Endothelial cell of umbilical vein (primary cell): ENCODE measurements at regions of chrX and their contacts with region 1.

Region 1: DNA sequence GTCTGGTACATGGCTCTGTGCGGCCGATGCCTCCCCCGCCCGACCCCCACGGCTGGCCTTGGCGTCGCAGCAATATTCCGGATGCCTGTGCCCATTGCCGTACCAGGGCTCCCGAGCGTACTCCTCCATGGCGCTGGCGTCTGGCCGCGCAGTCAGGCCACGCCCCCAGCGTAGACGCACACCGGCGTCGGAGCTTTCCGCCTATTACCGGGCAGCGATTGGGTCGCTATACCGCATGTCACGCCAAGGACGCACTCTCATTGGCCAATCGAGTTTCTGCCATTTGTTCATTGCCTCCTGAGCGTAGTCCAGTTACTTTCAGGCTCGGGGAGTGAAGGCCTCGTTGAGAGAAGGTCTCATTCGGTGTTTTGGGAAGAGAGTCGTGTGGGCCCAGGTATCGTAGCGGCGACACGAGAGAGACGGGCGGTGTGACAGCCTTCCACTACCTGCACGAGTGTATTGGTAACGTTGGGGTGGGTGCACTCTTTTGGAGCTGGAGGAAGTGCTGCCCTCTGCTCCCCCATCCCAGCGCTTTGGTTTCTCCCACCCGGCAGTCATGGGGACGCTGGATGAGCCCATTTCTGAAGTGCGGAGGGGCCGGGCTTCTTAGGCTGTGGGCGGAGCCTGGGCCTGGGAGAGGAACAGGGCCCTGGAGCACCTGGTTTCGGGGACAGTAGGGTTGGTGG is at the starts of genes PQBP1 and TIMM17B:
- DNase-seq: peak; percentile 96
- H3K4me3 ChIP-seq: peak within 1 kb of the TSS; percentile 17 to 65 (median 51)
- H3K27ac ChIP-seq: peak within 1 kb of the TSS; percentile 69
- H3K4me1 ChIP-seq: peaks cover 6% of the 10 kb centered on the region
- H3K27me3 ChIP-seq: no peaks in the 10 kb centered on the region
- CTCF ChIP-seq: no peak
- POLR2A ChIP-seq: peak; percentile 72
- total RNA-seq, gene PQBP1: 72.8 and 86.3 TPM in 2 replicates
- total RNA-seq, gene TIMM17B: 30.0 and 36.0 TPM in 2 replicates

Region 2: DNA sequence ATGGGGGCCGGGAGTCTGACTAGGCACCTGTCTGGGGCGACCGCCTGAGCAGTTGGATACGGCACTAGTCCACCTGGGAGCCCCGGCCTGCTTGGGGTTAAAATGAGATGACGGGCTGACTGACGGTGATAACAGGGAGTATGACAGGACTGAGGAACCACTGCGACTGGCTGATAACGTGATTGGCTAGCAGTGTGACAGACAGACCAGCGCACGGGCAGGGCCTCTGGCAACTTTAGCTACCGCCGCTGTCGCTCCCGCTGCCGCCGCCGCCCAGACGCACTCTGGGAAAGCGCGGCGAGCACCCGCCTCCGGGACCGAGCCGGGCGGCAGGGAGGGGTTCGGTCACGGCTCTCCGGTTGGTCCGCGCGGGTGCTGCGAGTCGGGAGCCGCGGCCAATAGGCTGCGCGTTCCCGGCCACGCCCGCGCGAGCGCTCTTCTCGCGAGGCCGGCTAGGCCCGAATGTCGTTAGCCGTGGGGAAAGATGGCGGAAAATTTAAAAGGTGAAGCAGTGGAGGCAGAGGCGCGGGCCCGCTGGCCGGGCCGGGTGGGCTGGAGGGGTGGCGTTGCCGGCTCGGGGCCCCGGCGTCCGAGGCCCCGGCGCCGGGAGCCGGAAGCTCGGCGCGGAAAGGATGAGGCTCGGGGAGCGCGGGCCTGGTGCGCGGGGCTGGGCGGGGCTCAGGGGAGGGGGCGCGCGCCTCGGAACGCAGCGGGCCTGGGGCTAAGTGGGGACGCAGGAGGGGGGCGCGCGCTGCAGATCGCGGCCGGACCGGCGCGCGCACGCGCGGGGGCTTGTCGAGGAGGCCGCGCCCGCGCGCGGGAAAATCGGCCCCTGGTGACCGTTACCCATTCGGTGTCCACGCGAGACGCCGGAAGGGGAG is 201.2 kb before region 1 on chrX and contains the start of gene SUV39H1:
- CTCF ChIA-PET with region 1: no interaction called
- POLR2A ChIA-PET with region 1: no interaction called
- dilution Hi-C with region 1: no loop called
- intact Hi-C with region 1: loop called (anchors 1 kb)
- DNase-seq: peak; percentile 87
- H3K4me3 ChIP-seq: peak within 1 kb of the TSS; percentile 60 to 76 (median 72)
- H3K27ac ChIP-seq: peak within 1 kb of the TSS; percentile 57
- H3K4me1 ChIP-seq: peaks cover 5% of the 10 kb centered on the region
- H3K27me3 ChIP-seq: no peaks in the 10 kb centered on the region
- CTCF ChIP-seq: no peak
- POLR2A ChIP-seq: peak; percentile 80
- total RNA-seq, gene SUV39H1: 18.2 and 20.0 TPM in 2 replicates

Region 3: GRCh38 chrX:48737213-48737938 is 160.4 kb before region 1 on chrX:
- CTCF ChIA-PET with region 1: no interaction called
- POLR2A ChIA-PET with region 1: interaction called, 3 read pairs
- dilution Hi-C with region 1: no loop called
- intact Hi-C with region 1: loop called (anchors 1 kb)
- DNase-seq: peak; percentile 95
- H3K4me3 ChIP-seq: peak overlapping the region; percentile 11 to 58 (median 45)
- H3K27ac ChIP-seq: peak overlapping the region; percentile 64
- H3K4me1 ChIP-seq: peaks cover 3% of the 10 kb centered on the region
- H3K27me3 ChIP-seq: no peaks in the 10 kb centered on the region
- CTCF ChIP-seq: no peak
- POLR2A ChIP-seq: peak; percentile 75

Region 4: DNA sequence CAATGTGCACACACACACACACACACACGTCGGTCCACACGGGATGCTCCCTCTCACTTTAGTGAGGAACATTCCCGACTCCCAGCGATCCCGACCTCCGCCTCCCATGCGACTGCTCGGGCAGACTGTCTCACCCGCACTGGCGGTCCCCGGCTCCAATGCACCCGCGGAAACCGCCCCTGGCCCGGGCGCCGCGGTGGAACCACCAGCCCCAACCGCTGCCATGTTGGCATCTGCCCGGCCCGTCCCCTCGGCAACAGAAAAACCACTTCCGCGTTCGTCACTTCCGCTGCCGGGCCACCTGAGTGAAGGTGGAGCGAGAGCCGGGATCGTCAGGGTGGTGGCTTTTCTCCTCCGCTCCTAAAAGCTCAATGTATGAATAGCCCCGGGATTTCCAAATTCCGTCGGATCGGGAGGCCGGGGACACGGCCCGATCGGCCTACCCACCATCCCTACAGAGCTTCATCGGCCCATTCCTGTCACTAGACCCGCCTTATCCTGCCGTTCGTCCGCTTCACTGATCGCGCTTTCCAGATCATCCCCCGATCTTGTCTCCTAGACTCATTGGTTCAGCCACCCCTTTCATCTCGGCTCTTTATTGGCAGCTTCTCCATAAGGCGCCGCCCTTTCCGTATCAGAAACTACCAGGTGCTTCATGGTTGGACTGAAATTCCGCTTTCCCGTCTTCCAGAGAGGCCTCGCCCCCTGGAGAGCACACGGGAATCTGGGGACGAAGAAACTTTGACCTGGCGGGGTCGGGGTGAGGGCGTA is 13.8 kb after region 1 on chrX and contains the start of gene SLC35A2:
- CTCF ChIA-PET with region 1: interaction called, 4 read pairs
- POLR2A ChIA-PET with region 1: no interaction called
- dilution Hi-C with region 1: no loop called
- intact Hi-C with region 1: loop called (anchors 2 kb)
- DNase-seq: peak; percentile 75
- H3K4me3 ChIP-seq: peak within 1 kb of the TSS; percentile 45 to 92 (median 78)
- H3K27ac ChIP-seq: peak within 1 kb of the TSS; percentile 49
- H3K4me1 ChIP-seq: peaks cover 9% of the 10 kb centered on the region
- H3K27me3 ChIP-seq: no peaks in the 10 kb centered on the region
- CTCF ChIP-seq: no peak
- POLR2A ChIP-seq: peak; percentile 59
- total RNA-seq, gene SLC35A2: 28.9 and 31.4 TPM in 2 replicates

Region 5: DNA sequence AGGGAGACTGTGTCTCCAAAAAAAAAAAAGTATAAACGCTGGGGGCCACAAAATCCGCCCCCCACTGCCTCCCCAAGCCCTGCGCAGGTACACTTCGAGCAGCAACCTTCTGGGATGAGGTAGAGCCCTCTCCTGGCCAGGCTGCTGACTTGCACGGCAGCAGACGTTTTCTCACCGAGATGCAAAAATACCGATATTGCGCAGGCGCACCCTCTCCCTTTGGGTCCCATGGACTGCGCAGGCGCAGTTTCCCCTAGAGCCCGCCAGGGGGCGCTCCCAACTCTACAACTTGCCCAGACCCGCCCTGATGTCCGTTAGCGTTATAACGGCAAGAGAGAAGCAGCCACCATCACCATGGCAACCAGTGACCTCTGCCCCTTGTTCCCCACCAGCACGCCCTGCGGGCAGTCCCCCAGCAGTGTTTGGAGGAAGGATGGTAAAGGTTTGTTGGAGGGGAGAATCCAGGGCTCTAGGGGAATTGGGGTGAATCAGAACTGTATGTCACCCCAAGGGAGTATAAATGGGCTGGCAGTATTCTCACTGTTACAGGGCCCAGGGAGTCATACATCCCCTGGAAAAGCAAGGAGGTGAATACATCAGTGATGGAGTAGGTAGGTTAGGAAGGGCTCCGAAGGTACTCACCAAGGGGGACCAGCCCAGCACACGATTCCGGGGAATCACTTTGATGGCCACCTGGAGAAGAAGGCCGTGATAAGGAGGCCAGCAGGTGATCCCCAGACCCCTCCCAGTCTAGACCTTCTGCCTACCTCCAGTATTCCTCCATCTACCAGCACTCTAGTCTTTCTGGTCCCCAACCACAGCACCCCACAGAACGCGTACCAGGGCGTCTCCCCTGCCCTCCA is 19.6 kb after region 1 on chrX:
- CTCF ChIA-PET with region 1: no interaction called
- POLR2A ChIA-PET with region 1: no interaction called
- dilution Hi-C with region 1: no loop called
- intact Hi-C with region 1: loop called (anchors 1 kb)
- DNase-seq: peak; percentile 93
- H3K4me3 ChIP-seq: no peak overlapping the region
- H3K27ac ChIP-seq: no peak overlapping the region
- H3K4me1 ChIP-seq: peaks cover 2% of the 10 kb centered on the region
- H3K27me3 ChIP-seq: no peaks in the 10 kb centered on the region
- CTCF ChIP-seq: peak; percentile 91 to 95
- POLR2A ChIP-seq: no peak

Region 6: DNA sequence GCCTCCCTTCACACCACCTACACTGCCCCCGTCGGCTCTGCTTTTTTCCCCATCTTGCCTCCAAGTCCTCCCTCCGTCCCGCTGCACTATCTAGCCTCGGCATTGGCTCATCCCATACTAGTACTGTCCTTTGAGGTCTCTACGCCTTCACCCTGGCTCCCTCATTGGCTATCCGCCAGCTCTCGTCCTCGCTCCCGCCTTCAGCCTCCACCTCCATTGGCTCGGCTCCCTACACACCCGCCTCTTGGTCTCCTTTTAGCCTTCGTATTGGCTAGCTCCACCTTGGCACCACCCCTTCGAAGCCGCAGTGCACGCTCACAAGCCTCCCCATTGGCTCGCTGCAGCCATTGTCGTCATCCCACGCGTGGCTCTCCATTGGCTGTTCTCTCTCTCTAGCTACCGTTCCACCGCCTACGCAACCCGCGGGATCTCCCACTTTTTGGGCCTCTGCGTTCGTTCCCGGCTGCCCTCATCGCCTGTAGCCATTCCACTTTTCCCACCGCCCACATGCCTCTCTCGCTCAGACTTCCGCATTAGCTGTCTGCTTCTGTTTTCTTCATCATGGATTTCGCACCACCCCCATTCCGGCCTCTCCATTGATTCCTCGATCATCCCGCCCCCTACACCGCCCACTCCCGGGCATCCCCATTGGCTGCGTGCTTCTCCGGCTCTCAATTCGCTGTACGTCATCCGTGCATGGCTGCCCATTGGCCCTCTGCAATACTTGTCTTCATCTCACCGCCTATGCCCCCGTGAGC is 371.4 kb after region 1 on chrX:
- CTCF ChIA-PET with region 1: no interaction called
- POLR2A ChIA-PET with region 1: no interaction called
- dilution Hi-C with region 1: no loop called
- intact Hi-C with region 1: loop called (anchors 10 kb)
- DNase-seq: peak; percentile 97
- H3K4me3 ChIP-seq: peak overlapping the region; percentile 23 to 78 (median 59)
- H3K27ac ChIP-seq: peak overlapping the region; percentile 80
- H3K4me1 ChIP-seq: no peaks in the 10 kb centered on the region
- H3K27me3 ChIP-seq: no peaks in the 10 kb centered on the region
- CTCF ChIP-seq: no peak
- POLR2A ChIP-seq: peak; percentile 67